ENCODE measurements at regions of chr2 and their contacts with region 1.

Region 1: DNA sequence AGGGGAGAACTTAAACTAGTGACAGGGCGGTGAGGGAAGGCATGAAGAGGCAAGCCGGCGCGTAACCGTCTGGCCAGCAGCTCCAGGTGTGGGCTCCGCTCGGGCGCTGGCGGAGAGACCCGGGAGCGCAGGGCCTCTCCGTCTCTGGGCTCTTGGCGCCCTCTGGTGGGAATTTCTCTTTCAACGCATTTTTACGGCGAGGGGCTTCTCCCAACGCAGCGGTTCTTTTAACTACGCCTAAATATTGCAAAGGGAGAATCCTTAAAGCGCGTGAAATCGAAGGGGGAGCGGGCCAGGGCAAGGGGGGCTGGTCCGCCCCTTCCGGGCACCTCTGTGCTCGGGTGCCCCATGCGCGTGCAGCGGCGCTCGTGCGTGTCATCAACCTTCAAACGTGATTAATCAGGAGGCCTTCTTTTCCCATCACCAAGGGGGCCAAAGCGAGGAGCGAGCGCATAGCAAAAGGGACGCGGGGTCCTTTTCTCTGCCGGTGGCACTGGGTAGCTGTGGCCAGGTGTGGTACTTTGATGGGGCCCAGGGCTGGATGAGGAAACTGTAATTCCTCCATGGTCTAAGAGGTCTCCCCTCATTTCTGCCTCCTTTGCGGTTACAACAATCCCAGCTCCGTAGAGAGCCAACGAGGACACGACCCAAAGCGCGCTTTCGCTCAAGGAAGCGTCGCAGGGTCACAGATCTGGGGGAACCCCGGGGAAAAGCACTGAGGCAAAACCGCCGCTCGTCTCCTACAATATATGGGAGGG is 762 bp upstream of the GAD1 start:
- DNase-seq: peak; percentile 91
- H3K4me3 Mint-ChIP-seq: peak overlapping the region; percentile 83
- H3K27ac Mint-ChIP-seq: peak overlapping the region; percentile 78
- H3K4me1 Mint-ChIP-seq: peaks cover 34% of the 10 kb centered on the region
- H3K27me3 Mint-ChIP-seq: peaks cover 69% of the 10 kb centered on the region

Region 2: DNA sequence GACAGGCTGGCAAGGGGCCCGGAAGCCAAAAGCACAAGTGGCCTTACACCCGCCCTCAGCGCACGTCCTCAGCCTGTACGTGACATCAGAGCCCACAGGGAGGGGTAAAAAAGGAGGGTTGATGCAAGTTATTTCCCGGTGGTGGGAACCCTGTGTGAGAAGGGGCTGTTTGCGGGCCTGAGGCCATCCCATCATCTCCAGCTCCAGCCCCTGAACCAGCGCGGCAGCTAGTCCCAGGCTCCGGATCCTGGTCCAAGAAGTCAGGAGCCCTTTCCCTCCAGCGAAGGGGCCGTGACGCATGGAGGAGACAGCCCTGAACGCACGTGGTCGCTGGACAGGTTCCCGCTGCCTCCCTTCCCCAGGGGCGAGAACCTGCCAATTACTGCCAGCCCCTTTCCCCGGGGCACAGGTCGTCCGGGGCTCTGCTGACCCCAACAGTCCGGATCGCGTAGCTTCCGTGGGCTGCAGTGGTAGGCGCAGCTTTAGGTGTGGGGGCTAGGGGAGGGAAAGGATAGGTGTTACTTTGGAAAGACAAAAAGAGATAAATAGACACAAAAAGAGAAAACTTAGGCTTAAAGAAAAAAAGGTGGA is 1452.3 kb before region 1 on chr2:
- intact Hi-C with region 1: loop called (anchors 5 kb)
- DNase-seq: peak; percentile 86
- H3K4me3 Mint-ChIP-seq: peak overlapping the region; percentile 85
- H3K27ac Mint-ChIP-seq: peak overlapping the region; percentile 93
- H3K4me1 Mint-ChIP-seq: peaks cover 34% of the 10 kb centered on the region
- H3K27me3 Mint-ChIP-seq: peaks cover 53% of the 10 kb centered on the region

Region 3: GRCh38 chr2:170324640-170325046 is 491.3 kb before region 1 on chr2:
- intact Hi-C with region 1: loop called (anchors 1 kb)
- DNase-seq: peak; percentile 85
- H3K4me3 Mint-ChIP-seq: no peak overlapping the region
- H3K27ac Mint-ChIP-seq: no peak overlapping the region
- H3K4me1 Mint-ChIP-seq: no peaks in the 10 kb centered on the region
- H3K27me3 Mint-ChIP-seq: peaks cover 6% of the 10 kb centered on the region

Region 4: DNA sequence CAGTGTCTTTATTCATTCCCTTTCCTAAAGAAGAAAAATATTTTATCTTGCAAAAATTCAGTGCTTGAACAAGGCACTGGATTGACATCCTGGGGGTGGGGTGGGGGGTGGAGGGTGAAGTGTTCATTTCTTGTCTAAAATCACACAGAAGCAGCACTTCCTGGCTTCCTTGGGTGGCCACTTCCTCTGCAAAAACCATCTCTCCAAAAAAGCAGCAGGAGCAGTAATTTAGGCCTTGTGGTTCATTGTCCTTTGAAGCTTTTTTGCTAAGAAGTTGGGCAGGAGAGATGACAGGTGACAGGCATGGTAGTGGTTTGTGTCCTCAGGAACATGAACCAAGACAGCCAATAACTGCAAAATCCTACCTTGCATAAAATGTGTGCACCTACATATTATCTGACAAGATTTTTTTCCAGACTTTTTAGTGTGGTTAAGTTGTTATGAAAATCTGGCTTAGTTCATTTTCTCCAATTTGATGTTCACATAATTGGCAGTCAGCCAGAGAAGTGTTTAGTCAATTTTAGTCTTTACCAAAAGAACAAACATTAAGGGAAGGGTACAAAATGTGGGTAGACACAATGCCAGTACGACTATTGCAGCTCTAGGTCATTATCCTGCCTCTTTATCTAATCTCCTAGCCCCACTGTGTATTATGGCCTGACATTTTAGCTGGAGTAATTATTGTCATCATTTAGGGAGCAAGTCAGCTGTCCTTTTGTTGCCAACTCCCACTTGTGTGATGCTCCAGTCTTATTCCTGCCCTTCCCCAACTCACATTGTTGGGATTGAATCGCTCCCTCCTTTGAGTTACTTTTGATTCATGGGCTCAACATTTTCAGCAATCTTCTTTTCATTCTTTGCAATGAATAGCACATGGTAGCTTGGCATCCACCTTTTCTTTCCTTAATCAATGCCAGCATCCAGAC is 460.8 kb before region 1 on chr2:
- intact Hi-C with region 1: no loop called
- DNase-seq: peak; percentile 78
- H3K4me3 Mint-ChIP-seq: peak overlapping the region; percentile 11
- H3K27ac Mint-ChIP-seq: peak overlapping the region; percentile 56
- H3K4me1 Mint-ChIP-seq: peaks cover 27% of the 10 kb centered on the region
- H3K27me3 Mint-ChIP-seq: peaks cover 2% of the 10 kb centered on the region

Region 5: GRCh38 chr2:170369894-170370293 is 446.0 kb before region 1 on chr2:
- intact Hi-C with region 1: loop called (anchors 1 kb)
- DNase-seq: no peak
- H3K4me3 Mint-ChIP-seq: no peak overlapping the region
- H3K27ac Mint-ChIP-seq: no peak overlapping the region
- H3K4me1 Mint-ChIP-seq: peaks cover 44% of the 10 kb centered on the region
- H3K27me3 Mint-ChIP-seq: peaks cover 14% of the 10 kb centered on the region

Region 6: GRCh38 chr2:170409164-170409535 is 406.8 kb before region 1 on chr2:
- intact Hi-C with region 1: loop called (anchors 1 kb)
- DNase-seq: peak; percentile 92
- H3K4me3 Mint-ChIP-seq: peak overlapping the region; percentile 65
- H3K27ac Mint-ChIP-seq: no peak overlapping the region
- H3K4me1 Mint-ChIP-seq: peaks cover 7% of the 10 kb centered on the region
- H3K27me3 Mint-ChIP-seq: peaks cover 30% of the 10 kb centered on the region

Region 7: GRCh38 chr2:170770606-170771420 is 45.1 kb before region 1 on chr2:
- intact Hi-C with region 1: loop called (anchors 2 kb)
- DNase-seq: peak; percentile 89
- H3K4me3 Mint-ChIP-seq: peak overlapping the region; percentile 85
- H3K27ac Mint-ChIP-seq: peak overlapping the region; percentile 82
- H3K4me1 Mint-ChIP-seq: peaks cover 5% of the 10 kb centered on the region
- H3K27me3 Mint-ChIP-seq: peaks cover 31% of the 10 kb centered on the region

Region 8: GRCh38 chr2:171433763-171434670 is 618.1 kb after region 1 on chr2 and contains the starts of genes DCAF17 and METTL8:
- intact Hi-C with region 1: no loop called
- DNase-seq: peak; percentile 98
- H3K4me3 Mint-ChIP-seq: peak within 1 kb of the TSS; percentile 82
- H3K27ac Mint-ChIP-seq: peak within 1 kb of the TSS; percentile 88
- H3K4me1 Mint-ChIP-seq: peaks cover 23% of the 10 kb centered on the region
- H3K27me3 Mint-ChIP-seq: no peaks in the 10 kb centered on the region
- total RNA-seq, gene DCAF17: 27.3 and 27.4 TPM in 2 replicates
- total RNA-seq, gene METTL8: 33.1 and 42.9 TPM in 2 replicates

Region 9: GRCh38 chr2:172084734-172085459 is 1269.0 kb after region 1 on chr2:
- intact Hi-C with region 1: loop called (anchors 2 kb)
- DNase-seq: peak; percentile 83
- H3K4me3 Mint-ChIP-seq: peak overlapping the region; percentile 78
- H3K27ac Mint-ChIP-seq: peak overlapping the region; percentile 81
- H3K4me1 Mint-ChIP-seq: peaks cover 34% of the 10 kb centered on the region
- H3K27me3 Mint-ChIP-seq: peaks cover 90% of the 10 kb centered on the region